ENCODE measurements at regions of chr17 and their contacts with region 1.

Region 1: DNA sequence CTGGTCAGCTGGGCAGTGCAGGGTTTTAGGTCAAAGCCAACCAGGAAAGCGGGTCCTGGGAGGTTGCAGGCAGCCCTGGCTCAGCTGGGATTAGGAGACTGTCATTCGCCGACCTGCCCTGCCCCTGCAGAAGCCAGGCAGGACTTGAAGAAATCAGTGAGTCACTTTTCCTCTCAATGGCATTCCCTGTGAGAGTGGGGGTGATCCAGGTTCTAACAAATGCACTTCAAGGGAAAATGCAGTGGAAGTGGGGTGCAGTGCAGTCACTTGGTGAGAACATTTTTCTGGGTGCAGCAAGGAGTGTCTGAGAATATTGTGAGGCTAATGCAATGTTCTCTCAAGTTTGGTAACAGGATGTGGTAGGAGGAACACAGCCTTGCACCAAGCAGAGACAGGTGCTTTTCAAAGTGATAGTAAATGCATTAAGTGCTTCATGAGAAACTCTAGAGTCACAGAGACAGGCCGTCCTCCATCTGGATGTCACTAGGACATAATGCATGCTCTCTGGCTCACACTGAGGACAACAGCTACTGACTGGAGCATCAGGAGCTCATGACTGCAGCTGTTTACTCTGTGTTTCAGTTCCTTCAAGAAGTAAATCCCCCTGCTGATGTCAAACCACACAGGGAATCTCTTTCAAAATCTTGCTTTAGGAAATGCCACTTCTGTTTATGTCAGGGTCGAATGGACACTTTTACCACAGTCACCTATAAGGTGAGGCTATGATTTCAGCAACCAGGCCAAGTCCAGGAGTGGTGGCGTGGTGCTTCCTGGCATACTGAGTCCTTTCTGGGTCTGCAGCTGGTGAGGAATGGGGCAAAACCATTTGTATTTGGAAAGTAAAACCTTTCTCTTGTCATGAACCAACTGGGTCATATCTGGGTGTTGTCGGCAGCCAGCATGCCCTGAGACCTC is 16.7 kb downstream of the CDK5R1 start:
- DNase-seq: no peak
- ATAC-seq: peak in 3 of 4 donors; percentile 25 to 54 (median 51)
- H3K4me3 ChIP-seq: no peak overlapping the region
- H3K27ac ChIP-seq: no peak overlapping the region
- H3K4me1 ChIP-seq: no peaks in the 10 kb centered on the region
- H3K27me3 ChIP-seq: no peaks in the 10 kb centered on the region
- CTCF ChIP-seq: no peak

Region 2: DNA sequence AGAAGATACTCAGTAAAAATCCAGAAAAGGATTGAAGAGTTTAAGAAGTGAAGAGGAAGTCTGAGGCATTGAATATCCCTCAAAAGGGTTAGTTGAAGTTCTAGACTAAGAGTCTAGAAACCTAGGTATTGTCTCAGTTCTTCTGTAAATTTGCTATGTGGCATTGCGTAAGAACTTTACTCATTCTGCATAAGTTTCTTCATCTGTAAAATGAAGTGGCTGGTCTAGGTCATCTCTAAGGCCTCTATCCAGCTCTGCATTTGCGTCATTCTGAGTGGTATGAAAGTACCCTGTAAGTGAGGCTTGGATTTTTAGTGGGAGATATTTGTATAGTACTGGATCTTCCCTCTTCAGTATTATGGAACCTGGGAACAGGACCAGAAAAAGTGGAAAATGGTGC is 243.2 kb after region 1 on chr17:
- intact Hi-C with region 1: loop called in 1 of 2 experiments (anchors 10 kb)
- DNase-seq: no peak
- ATAC-seq: no peak
- H3K4me3 ChIP-seq: no peak overlapping the region
- H3K27ac ChIP-seq: no peak overlapping the region
- H3K4me1 ChIP-seq: no peaks in the 10 kb centered on the region
- H3K27me3 ChIP-seq: no peaks in the 10 kb centered on the region
- CTCF ChIP-seq: no peak

Measured in psoas muscle (tissue), 8 donors.